CD8-positive, alpha-beta T cell (primary cell): ENCODE measurements at regions of chr12 and their contacts with region 1.

Region 1: GRCh38 chr12:74537707-74538385 is at the start of gene ATXN7L3B:
- DNase-seq: peak; percentile 92 to 97 (median 96)
- ATAC-seq: peak; percentile 94
- H3K4me3 ChIP-seq: peak within 1 kb of the TSS; percentile 80 to 86
- H3K4me3 Mint-ChIP-seq: peak within 1 kb of the TSS; percentile 88
- H3K27ac ChIP-seq: peak within 1 kb of the TSS; percentile 94 to 96
- H3K27ac Mint-ChIP-seq: peak within 1 kb of the TSS; percentile 95
- H3K4me1 ChIP-seq: peaks cover 43% of the 10 kb centered on the region
- H3K4me1 Mint-ChIP-seq: peaks cover 53% of the 10 kb centered on the region
- H3K27me3 ChIP-seq: no peaks in the 10 kb centered on the region
- H3K27me3 Mint-ChIP-seq: no peaks in the 10 kb centered on the region
- CTCF ChIP-seq: no peak
- total RNA-seq, gene ATXN7L3B: 31.9 to 33.2 TPM

Region 2: DNA sequence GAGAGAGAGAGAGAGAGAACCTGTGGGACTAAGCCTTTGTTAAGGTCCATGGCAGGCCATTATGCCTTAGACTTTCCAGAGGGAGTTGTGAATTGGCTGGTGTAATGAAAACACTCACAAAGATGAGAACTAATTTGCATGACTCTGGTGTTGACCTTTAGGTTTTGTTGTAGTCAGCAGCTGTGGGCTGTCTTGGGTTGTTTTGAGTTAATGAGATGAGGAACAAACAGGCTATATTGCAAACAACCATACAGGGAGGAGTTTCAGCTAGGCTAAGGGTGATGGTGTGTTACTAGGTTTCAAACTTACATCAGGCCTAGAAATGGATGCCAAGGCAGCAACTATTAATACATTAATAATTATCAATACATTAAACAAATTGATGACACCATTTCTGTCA is 26.1 kb after region 1 on chr12:
- CTCF ChIA-PET with region 1: no interaction called
- POLR2A ChIA-PET with region 1: no interaction called
- intact Hi-C with region 1: no loop called
- DNase-seq: no peak
- ATAC-seq: no peak
- H3K4me3 ChIP-seq: no peak overlapping the region
- H3K4me3 Mint-ChIP-seq: no peak overlapping the region
- H3K27ac ChIP-seq: no peak overlapping the region
- H3K27ac Mint-ChIP-seq: no peak overlapping the region
- H3K4me1 ChIP-seq: no peaks in the 10 kb centered on the region
- H3K4me1 Mint-ChIP-seq: no peaks in the 10 kb centered on the region
- H3K27me3 ChIP-seq: peaks cover 0 to 5% of the 10 kb centered on the region in 2 experiments
- H3K27me3 Mint-ChIP-seq: peaks cover under 1% of the 10 kb centered on the region
- CTCF ChIP-seq: no peak

Region 3: DNA sequence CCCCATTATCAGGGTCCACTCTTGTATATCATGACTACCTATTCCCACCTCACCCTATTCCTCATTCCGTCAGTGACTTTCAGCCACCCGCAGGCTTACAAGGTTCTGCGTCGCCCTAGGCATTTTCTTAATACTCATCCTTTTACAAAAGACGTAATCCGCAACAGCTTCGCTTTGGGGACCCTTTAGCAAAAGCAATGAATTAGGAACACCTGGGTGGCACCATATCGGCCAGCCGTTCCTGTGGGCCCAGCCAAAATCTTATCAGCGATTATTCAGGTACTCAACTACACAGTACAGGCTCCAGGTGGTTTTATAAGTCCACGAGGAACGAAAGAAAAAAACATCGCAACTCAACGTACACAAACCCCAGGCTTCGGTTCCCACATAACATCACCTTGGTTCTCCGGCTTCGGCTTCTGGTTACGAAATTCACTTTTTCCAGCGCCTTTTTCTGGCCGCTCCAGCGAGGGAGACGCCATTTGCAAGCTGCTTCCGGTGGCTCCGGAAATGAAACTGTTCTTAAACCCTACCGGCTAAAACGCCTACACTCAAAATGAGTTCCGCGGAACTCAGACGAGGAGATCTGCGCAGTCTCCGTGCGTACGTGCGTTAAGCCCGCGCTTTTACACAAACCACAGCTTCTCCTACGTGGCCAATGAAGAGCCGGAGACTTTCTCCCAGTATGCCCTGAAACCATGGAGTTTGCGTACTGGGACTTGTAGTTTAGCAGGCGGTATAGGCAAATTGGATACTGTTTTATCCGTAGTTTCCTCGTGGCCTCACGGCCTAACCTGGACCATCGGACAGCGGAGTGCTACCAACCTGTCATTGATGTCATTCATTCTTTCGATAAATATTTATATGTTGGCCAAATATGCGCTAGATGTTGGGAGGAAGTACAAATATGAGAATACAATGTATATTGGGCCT is 973.5 kb after region 1 on chr12 and contains the start of gene KRR1:
- CTCF ChIA-PET with region 1: no interaction called
- POLR2A ChIA-PET with region 1: no interaction called
- intact Hi-C with region 1: loop called in 1 of 2 experiments (anchors 5 kb)
- DNase-seq: peak; percentile 75 to 98 (median 88)
- ATAC-seq: peak; percentile 95
- H3K4me3 ChIP-seq: peak within 1 kb of the TSS; percentile 89 to 93
- H3K4me3 Mint-ChIP-seq: peak within 1 kb of the TSS; percentile 98
- H3K27ac ChIP-seq: peak within 1 kb of the TSS; percentile 89
- H3K27ac Mint-ChIP-seq: peak within 1 kb of the TSS; percentile 98
- H3K4me1 ChIP-seq: peaks cover 18% of the 10 kb centered on the region
- H3K4me1 Mint-ChIP-seq: peaks cover 33% of the 10 kb centered on the region
- H3K27me3 ChIP-seq: no peaks in the 10 kb centered on the region
- H3K27me3 Mint-ChIP-seq: no peaks in the 10 kb centered on the region
- CTCF ChIP-seq: no peak
- total RNA-seq, gene KRR1: 158 to 161 TPM